ENCODE measurements at regions of chr12 and their contacts with region 1.

Region 1: DNA sequence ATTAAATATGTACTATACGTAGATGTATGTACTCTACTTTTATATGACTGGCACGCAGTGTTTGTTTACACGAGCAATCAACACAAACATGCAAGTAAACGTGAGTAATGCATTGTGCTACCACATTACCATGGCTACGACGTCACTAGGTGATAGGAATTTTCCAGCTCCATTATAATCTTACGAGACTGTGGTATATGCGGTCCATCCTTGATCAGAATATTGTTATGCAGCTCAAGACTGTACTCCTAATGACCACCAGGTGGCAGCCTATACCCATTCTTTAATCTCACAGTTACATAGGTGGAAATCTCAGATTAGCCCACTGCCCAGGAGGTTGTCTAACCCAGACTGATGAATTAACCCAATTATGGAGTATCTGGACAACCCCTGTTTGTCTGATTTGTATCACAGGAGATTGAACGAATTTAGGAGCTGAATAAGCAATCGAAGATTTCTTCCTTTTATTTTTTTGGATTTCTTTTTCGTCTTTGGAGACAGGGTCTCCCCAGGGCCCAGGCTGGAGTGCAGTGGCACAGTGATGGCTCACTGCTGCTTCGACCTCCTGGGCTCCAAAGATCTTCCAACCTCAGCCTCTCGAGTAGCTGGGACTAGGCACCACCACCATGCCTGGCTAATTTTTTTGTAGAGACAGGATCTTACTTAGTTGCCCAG is 8.7 kb upstream of the TESPA1 start:
- DNase-seq: peak in 13 of 14 experiments; percentile 34 to 91 (median 45)
- ATAC-seq: peak; percentile 77
- H3K4me3 ChIP-seq: no peak overlapping the region
- H3K4me3 Mint-ChIP-seq: peak overlapping the region; percentile 22
- H3K27ac ChIP-seq: no peak overlapping the region
- H3K27ac Mint-ChIP-seq: peak overlapping the region; percentile 100
- H3K4me1 ChIP-seq: peaks cover 36% of the 10 kb centered on the region
- H3K4me1 Mint-ChIP-seq: peaks cover 49% of the 10 kb centered on the region
- H3K27me3 ChIP-seq: no peaks in the 10 kb centered on the region
- H3K27me3 Mint-ChIP-seq: no peaks in the 10 kb centered on the region
- CTCF ChIP-seq: peak; percentile 92

Region 2: GRCh38 chr12:54596526-54596946 is 396.8 kb before region 1 on chr12:
- CTCF ChIA-PET with region 1: no interaction called
- POLR2A ChIA-PET with region 1: no interaction called
- intact Hi-C with region 1: loop called in 1 of 2 experiments (anchors 10 kb)
- DNase-seq: peak; percentile 12 to 71 (median 36)
- ATAC-seq: peak; percentile 60
- H3K4me3 ChIP-seq: no peak overlapping the region
- H3K4me3 Mint-ChIP-seq: no peak overlapping the region
- H3K27ac ChIP-seq: no peak overlapping the region
- H3K27ac Mint-ChIP-seq: no peak overlapping the region
- H3K4me1 ChIP-seq: peaks cover 5% of the 10 kb centered on the region
- H3K4me1 Mint-ChIP-seq: peaks cover 5% of the 10 kb centered on the region
- H3K27me3 ChIP-seq: peaks cover 0 to 2% of the 10 kb centered on the region in 2 experiments
- H3K27me3 Mint-ChIP-seq: peaks cover 11% of the 10 kb centered on the region
- CTCF ChIP-seq: peak; percentile 85

Region 3: GRCh38 chr12:54749191-54749818 is 244.0 kb before region 1 on chr12:
- CTCF ChIA-PET with region 1: interaction called, 18 read pairs
- POLR2A ChIA-PET with region 1: no interaction called
- intact Hi-C with region 1: loop called (anchors 2 to 10 kb)
- DNase-seq: peak in 9 of 14 experiments; percentile 6 to 83 (median 28)
- ATAC-seq: peak; percentile 71
- H3K4me3 ChIP-seq: no peak overlapping the region
- H3K4me3 Mint-ChIP-seq: no peak overlapping the region
- H3K27ac ChIP-seq: no peak overlapping the region
- H3K27ac Mint-ChIP-seq: no peak overlapping the region
- H3K4me1 ChIP-seq: peaks cover 4% of the 10 kb centered on the region
- H3K4me1 Mint-ChIP-seq: peaks cover 18% of the 10 kb centered on the region
- H3K27me3 ChIP-seq: no peaks in the 10 kb centered on the region
- H3K27me3 Mint-ChIP-seq: no peaks in the 10 kb centered on the region
- CTCF ChIP-seq: peak; percentile 91

Region 4: GRCh38 chr12:54853995-54854566 is 139.2 kb before region 1 on chr12 and contains the start of gene MUCL1:
- CTCF ChIA-PET with region 1: interaction called, 6 read pairs
- POLR2A ChIA-PET with region 1: no interaction called
- intact Hi-C with region 1: loop called in 1 of 2 experiments (anchors 2 kb)
- DNase-seq: peak; percentile 46 to 84 (median 64)
- ATAC-seq: peak; percentile 100
- H3K4me3 ChIP-seq: no peak within 1 kb of the TSS
- H3K4me3 Mint-ChIP-seq: no peak within 1 kb of the TSS
- H3K27ac ChIP-seq: no peak within 1 kb of the TSS
- H3K27ac Mint-ChIP-seq: no peak within 1 kb of the TSS
- H3K4me1 ChIP-seq: no peaks in the 10 kb centered on the region
- H3K4me1 Mint-ChIP-seq: no peaks in the 10 kb centered on the region
- H3K27me3 ChIP-seq: no peaks in the 10 kb centered on the region
- H3K27me3 Mint-ChIP-seq: no peaks in the 10 kb centered on the region
- CTCF ChIP-seq: peak; percentile 90
- total RNA-seq, gene MUCL1: not detected

Region 5: GRCh38 chr12:54958048-54958658 is 35.1 kb before region 1 on chr12:
- CTCF ChIA-PET with region 1: interaction called, 15 read pairs
- POLR2A ChIA-PET with region 1: interaction called, 3 read pairs
- intact Hi-C with region 1: loop called in 1 of 2 experiments (anchors 5 kb)
- DNase-seq: peak in 11 of 14 experiments; percentile 23 to 81 (median 44)
- ATAC-seq: peak; percentile 64
- H3K4me3 ChIP-seq: no peak overlapping the region
- H3K4me3 Mint-ChIP-seq: peak overlapping the region; percentile 0
- H3K27ac ChIP-seq: no peak overlapping the region
- H3K27ac Mint-ChIP-seq: peak overlapping the region; percentile 56
- H3K4me1 ChIP-seq: peaks cover 52% of the 10 kb centered on the region
- H3K4me1 Mint-ChIP-seq: peaks cover 91% of the 10 kb centered on the region
- H3K27me3 ChIP-seq: no peaks in the 10 kb centered on the region
- H3K27me3 Mint-ChIP-seq: no peaks in the 10 kb centered on the region
- CTCF ChIP-seq: peak; percentile 77

Region 6: GRCh38 chr12:54967461-54967860 is 25.8 kb before region 1 on chr12:
- CTCF ChIA-PET with region 1: interaction called, 17 read pairs
- POLR2A ChIA-PET with region 1: interaction called, 4 read pairs
- intact Hi-C with region 1: no loop called
- DNase-seq: peak in 8 of 14 experiments; percentile 15 to 69 (median 36)
- ATAC-seq: peak; percentile 57
- H3K4me3 ChIP-seq: peak overlapping the region; percentile 8
- H3K4me3 Mint-ChIP-seq: peak overlapping the region; percentile 71
- H3K27ac ChIP-seq: peak overlapping the region in 1 of 2 donors; percentile 67
- H3K27ac Mint-ChIP-seq: peak overlapping the region; percentile 85
- H3K4me1 ChIP-seq: peaks cover 43% of the 10 kb centered on the region
- H3K4me1 Mint-ChIP-seq: peaks cover 87% of the 10 kb centered on the region
- H3K27me3 ChIP-seq: no peaks in the 10 kb centered on the region
- H3K27me3 Mint-ChIP-seq: no peaks in the 10 kb centered on the region
- CTCF ChIP-seq: no peak

Region 7: GRCh38 chr12:55142669-55143565 is 149.6 kb after region 1 on chr12:
- CTCF ChIA-PET with region 1: interaction called, 3 read pairs
- POLR2A ChIA-PET with region 1: no interaction called
- intact Hi-C with region 1: loop called (anchors 2 to 5 kb)
- DNase-seq: peak in 12 of 14 experiments; percentile 12 to 69 (median 29)
- ATAC-seq: no peak
- H3K4me3 ChIP-seq: no peak overlapping the region
- H3K4me3 Mint-ChIP-seq: no peak overlapping the region
- H3K27ac ChIP-seq: no peak overlapping the region
- H3K27ac Mint-ChIP-seq: no peak overlapping the region
- H3K4me1 ChIP-seq: no peaks in the 10 kb centered on the region
- H3K4me1 Mint-ChIP-seq: no peaks in the 10 kb centered on the region
- H3K27me3 ChIP-seq: no peaks in the 10 kb centered on the region
- H3K27me3 Mint-ChIP-seq: peaks cover 4% of the 10 kb centered on the region
- CTCF ChIP-seq: peak; percentile 92